ENCODE measurements at regions of chr12 and their contacts with region 1.

Region 1: DNA sequence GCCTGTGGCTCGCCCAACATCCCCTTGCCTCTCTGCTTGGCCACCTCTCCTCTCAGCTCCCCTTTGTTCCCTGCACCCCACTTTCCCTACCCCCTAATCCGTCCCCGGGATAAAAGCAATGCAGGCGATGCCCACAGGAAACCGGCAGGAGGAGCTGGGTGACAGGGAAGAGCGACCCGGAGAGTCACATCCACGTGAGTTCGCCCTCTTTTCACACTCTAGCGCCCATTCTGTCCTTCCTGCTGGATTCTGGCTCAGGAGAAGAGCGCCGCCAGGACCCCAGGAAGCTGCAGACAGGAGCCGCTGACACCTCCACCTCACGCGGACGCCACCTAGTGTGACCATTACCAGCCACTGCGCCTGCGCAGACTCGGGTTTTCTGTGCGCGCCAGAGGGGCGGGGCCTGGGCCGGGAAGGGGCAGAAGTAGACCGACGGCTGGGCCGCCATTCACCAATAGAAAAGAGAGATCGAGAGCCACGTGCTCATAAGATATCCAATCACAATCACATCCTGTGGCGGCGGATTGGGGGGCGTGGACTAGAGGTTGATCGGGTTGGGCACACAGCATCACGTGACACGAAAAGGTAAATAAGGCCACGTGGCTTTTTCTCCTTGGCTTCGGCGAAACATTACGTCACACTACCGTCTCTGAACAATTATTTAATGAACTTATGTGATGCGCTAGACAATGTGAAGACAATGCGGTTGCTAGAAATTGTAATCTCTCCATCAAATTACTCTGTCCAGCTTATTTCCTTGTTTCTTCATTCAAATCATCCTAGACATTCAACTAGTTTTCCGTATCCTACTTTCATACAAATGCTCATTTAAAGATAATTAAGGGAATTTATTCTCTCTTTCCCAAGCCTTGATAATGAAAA is 10.1 kb downstream of the PLA2G1B start:
- DNase-seq: peak; percentile 99 to 100 (median 100)
- H3K4me3 ChIP-seq: peak overlapping the region; percentile 69
- H3K4me3 Mint-ChIP-seq: peak overlapping the region; percentile 64 to 94 (median 88)
- H3K27ac ChIP-seq: peak overlapping the region; percentile 68
- H3K27ac Mint-ChIP-seq: peak overlapping the region; percentile 78 to 99 (median 96)
- H3K4me1 ChIP-seq: peaks cover 12% of the 10 kb centered on the region
- H3K4me1 Mint-ChIP-seq: peaks cover 13 to 16% (median 15%) of the 10 kb centered on the region in 3 donors
- H3K27me3 ChIP-seq: no peaks in the 10 kb centered on the region
- H3K27me3 Mint-ChIP-seq: no peaks in the 10 kb centered on the region

Region 2: DNA sequence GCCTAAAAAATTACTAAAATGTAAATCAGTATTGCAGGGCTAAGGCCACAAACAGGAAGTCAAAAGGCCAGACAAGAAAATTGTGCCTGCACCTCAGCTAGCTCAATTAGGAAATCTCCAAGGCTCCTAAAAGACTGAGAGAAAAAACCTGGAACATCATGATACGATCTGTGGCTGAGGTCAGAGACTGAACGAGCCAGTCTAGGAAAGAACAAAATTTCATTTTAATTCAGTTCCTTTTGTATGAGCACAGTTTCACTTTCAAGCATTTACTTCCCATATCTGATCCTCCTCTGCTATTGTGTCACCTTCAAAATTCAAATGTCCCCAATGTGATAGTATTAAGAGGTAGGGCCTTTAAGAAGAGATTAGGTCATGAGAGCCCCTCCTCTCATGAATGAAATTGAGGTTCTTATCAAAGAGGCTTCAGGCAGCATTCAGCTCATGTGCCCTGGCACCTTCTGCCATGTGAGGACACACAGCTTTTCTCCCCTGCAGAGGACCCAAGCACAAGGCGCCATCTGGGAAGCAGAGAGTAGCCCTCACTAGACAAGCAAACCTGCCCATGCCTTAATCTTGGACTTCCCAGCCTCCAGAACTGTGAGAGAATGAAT is 634.7 kb before region 1 on chr12:
- CTCF ChIA-PET with region 1: no interaction called
- POLR2A ChIA-PET with region 1: no interaction called
- DNase-seq: no peak
- H3K4me3 ChIP-seq: no peak overlapping the region
- H3K4me3 Mint-ChIP-seq: no peak overlapping the region
- H3K27ac ChIP-seq: no peak overlapping the region
- H3K27ac Mint-ChIP-seq: peak overlapping the region; percentile 38 to 91 (median 64)
- H3K4me1 ChIP-seq: no peaks in the 10 kb centered on the region
- H3K4me1 Mint-ChIP-seq: peaks cover 6 to 11% (median 7%) of the 10 kb centered on the region in 3 donors
- H3K27me3 ChIP-seq: no peaks in the 10 kb centered on the region
- H3K27me3 Mint-ChIP-seq: no peaks in the 10 kb centered on the region

Region 3: GRCh38 chr12:120199595-120200306 is 117.7 kb before region 1 on chr12:
- CTCF ChIA-PET with region 1: interaction called, 3 read pairs
- POLR2A ChIA-PET with region 1: interaction called, 10 read pairs
- DNase-seq: peak in 2 of 5 donors; percentile 14 to 23
- H3K4me3 ChIP-seq: peak overlapping the region; percentile 99
- H3K4me3 Mint-ChIP-seq: peak overlapping the region; percentile 85 to 99 (median 98)
- H3K27ac ChIP-seq: peak overlapping the region; percentile 86
- H3K27ac Mint-ChIP-seq: peak overlapping the region; percentile 89 to 99 (median 96)
- H3K4me1 ChIP-seq: peaks cover 46% of the 10 kb centered on the region
- H3K4me1 Mint-ChIP-seq: peaks cover 36 to 51% (median 44%) of the 10 kb centered on the region in 3 donors
- H3K27me3 ChIP-seq: no peaks in the 10 kb centered on the region
- H3K27me3 Mint-ChIP-seq: peaks cover 0 to 1% of the 10 kb centered on the region in 2 donors

Region 4: GRCh38 chr12:120292661-120293531 is 24.6 kb before region 1 on chr12 and contains the start of gene RNU4-1:
- CTCF ChIA-PET with region 1: interaction called, 6 read pairs
- POLR2A ChIA-PET with region 1: interaction called, 13 read pairs
- DNase-seq: peak; percentile 52 to 90 (median 85)
- H3K4me3 ChIP-seq: peak within 1 kb of the TSS; percentile 91
- H3K4me3 Mint-ChIP-seq: no peak within 1 kb of the TSS
- H3K27ac ChIP-seq: peak within 1 kb of the TSS; percentile 100
- H3K27ac Mint-ChIP-seq: no peak within 1 kb of the TSS
- H3K4me1 ChIP-seq: peaks cover 16% of the 10 kb centered on the region
- H3K4me1 Mint-ChIP-seq: peaks cover 4 to 7% (median 5%) of the 10 kb centered on the region in 3 donors
- H3K27me3 ChIP-seq: no peaks in the 10 kb centered on the region
- H3K27me3 Mint-ChIP-seq: no peaks in the 10 kb centered on the region
- total RNA-seq, gene RNU4-1: 628 to 678 TPM

Region 5: DNA sequence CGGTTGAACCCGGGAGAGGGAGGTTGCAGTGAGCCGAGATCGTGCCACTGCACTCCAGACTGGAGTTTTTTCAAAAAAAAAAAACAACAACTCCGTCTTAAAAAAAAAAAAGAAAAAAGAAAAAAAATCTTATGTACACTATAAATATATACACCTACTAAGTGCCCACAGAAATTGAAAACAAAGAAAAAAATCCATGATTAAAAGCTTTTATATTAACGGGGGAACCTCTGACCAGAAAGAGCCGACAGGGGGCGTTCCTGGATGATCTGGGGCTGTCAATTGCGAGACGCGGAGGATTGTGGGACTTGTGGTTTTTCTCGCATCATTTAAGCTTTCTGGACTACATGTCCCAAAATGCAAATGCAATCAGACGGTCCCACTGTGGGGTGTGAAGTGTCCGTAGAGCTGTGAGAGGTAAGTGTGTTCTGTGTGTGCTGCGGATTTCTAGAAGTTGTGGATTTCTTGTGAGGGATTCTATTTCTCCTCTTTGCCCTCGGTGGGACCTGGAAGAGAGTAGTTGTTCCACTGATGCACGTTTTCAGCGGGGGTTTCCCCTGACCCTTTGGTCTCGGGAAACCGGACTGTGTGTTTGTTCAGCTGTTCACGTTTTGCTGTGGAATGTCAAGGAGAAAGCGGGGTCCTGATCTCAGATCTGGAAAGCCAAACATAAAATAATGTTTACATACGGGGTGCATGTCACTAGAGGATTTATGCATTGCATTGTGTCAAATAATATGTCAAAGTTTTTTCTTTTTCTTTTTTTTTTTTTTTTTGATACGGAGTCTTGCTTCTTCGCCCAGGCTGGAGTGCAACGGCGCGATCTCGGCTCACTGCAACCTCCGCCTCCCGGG is 15.3 kb before region 1 on chr12 and contains the start of gene SIRT4:
- CTCF ChIA-PET with region 1: interaction called, 19 read pairs
- POLR2A ChIA-PET with region 1: interaction called, 6 read pairs
- DNase-seq: peak; percentile 82 to 91 (median 85)
- H3K4me3 ChIP-seq: peak within 1 kb of the TSS; percentile 100
- H3K4me3 Mint-ChIP-seq: peak within 1 kb of the TSS; percentile 88 to 98 (median 95)
- H3K27ac ChIP-seq: peak within 1 kb of the TSS; percentile 38
- H3K27ac Mint-ChIP-seq: peak within 1 kb of the TSS; percentile 60 to 94 (median 92)
- H3K4me1 ChIP-seq: no peaks in the 10 kb centered on the region
- H3K4me1 Mint-ChIP-seq: peaks cover 6 to 10% (median 7%) of the 10 kb centered on the region in 3 donors
- H3K27me3 ChIP-seq: no peaks in the 10 kb centered on the region
- H3K27me3 Mint-ChIP-seq: no peaks in the 10 kb centered on the region
- total RNA-seq, gene SIRT4: 1.8 to 1.9 TPM

Region 6: DNA sequence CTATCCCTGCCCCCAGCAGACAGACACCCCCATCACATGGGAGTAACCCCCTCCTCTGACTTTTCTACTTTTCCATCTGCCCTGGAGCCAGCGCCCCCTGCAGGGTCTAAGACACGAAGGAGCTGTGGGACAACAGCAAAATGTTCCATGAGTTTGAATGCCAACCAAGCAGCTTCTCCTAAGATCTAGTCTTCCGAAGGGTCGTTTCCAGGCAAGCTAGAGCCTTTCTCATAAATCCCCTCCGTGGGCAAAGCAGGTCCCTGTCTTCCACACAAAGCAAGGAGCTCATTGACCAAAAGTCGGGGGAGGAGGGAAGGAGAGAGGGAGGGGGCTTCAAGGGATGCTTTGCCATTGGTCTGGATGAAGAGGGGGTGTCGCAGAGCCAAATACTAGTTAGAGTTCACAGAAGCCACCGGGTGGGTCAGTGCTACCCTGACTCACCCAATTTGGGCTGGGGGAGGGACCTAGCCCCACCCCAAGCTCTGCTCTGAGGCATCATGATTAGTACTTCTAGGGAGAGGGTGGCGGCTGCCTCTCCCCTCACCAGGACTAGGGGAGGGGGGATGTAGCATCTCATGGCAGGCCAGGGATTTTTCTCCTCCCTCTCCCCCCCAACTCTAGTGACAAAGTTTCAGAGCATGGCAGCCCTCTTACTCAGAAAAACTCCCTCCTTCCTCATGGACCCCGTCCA is 49.9 kb after region 1 on chr12:
- CTCF ChIA-PET with region 1: no interaction called
- POLR2A ChIA-PET with region 1: no interaction called
- DNase-seq: no peak
- H3K4me3 ChIP-seq: no peak overlapping the region
- H3K4me3 Mint-ChIP-seq: peak overlapping the region; percentile 38 to 70 (median 61)
- H3K27ac ChIP-seq: no peak overlapping the region
- H3K27ac Mint-ChIP-seq: peak overlapping the region in 1 of 8 donors; percentile 92
- H3K4me1 ChIP-seq: peaks cover 5% of the 10 kb centered on the region
- H3K4me1 Mint-ChIP-seq: peaks cover 8 to 23% (median 18%) of the 10 kb centered on the region in 3 donors
- H3K27me3 ChIP-seq: peaks cover 45% of the 10 kb centered on the region
- H3K27me3 Mint-ChIP-seq: peaks cover 67 to 84% of the 10 kb centered on the region in 2 donors

Measured in CD8-positive, alpha-beta memory T cell (primary cell).